H1 (cell line): ENCODE measurements at regions of chr19 and their contacts with region 1.

Region 1: GRCh38 chr19:29873024-29873800 is 61.4 kb downstream of the CCNE1 start:
- DNase-seq: peak in 1 of 2 experiments; percentile 94
- H3K4me3 ChIP-seq: peak overlapping the region; percentile 24 to 70 (median 48)
- H3K27ac ChIP-seq: no peak overlapping the region
- H3K4me1 ChIP-seq: peaks cover 0 to 4% (median 1%) of the 10 kb centered on the region in 4 experiments; a peak in 4 of 7 replicates
- H3K27me3 ChIP-seq: peaks cover 0 to 14% (median 10%) of the 10 kb centered on the region in 4 experiments; a peak in 6 of 7 replicates
- CTCF ChIP-seq: peak; percentile 63 to 91 (median 79)
- EP300 ChIP-seq: no peak
- POLR2A ChIP-seq: no peak
- RAD21 ChIP-seq: peak; percentile 87 to 90

Region 2: DNA sequence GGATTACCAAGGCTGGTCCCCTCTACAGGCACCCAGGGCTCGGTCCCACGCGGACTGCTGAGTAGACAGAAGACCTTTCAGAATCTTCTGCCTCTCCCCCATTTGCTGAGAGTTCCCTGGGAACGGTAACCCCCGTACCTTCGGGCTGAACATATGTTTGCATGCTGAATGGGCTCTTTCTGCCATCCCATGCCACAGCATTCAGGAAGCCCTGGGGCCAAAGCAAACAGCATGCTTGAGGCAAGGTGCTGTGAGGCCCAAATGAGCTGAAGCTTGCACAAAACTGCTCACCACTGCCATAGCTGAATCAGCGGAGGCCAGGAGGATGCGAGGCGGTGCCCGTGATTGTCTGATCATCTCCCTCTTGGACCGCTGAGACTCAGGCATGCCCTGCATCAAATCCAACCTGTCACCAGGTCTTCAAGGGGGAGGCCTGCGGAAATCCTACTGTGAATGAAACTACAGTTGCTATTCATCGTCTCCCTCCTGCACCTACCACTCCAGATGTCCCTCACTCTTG is 141.8 kb before region 1 on chr19:
- CTCF ChIA-PET with region 1: interaction called, 16 read pairs
- POLR2A ChIA-PET with region 1: interaction called, 3 read pairs
- DNase-seq: no peak
- H3K4me3 ChIP-seq: no peak overlapping the region
- H3K27ac ChIP-seq: no peak overlapping the region
- H3K4me1 ChIP-seq: no peaks in the 10 kb centered on the region
- H3K27me3 ChIP-seq: no peaks in the 10 kb centered on the region
- CTCF ChIP-seq: no peak
- EP300 ChIP-seq: no peak
- POLR2A ChIP-seq: no peak
- RAD21 ChIP-seq: no peak

Region 3: DNA sequence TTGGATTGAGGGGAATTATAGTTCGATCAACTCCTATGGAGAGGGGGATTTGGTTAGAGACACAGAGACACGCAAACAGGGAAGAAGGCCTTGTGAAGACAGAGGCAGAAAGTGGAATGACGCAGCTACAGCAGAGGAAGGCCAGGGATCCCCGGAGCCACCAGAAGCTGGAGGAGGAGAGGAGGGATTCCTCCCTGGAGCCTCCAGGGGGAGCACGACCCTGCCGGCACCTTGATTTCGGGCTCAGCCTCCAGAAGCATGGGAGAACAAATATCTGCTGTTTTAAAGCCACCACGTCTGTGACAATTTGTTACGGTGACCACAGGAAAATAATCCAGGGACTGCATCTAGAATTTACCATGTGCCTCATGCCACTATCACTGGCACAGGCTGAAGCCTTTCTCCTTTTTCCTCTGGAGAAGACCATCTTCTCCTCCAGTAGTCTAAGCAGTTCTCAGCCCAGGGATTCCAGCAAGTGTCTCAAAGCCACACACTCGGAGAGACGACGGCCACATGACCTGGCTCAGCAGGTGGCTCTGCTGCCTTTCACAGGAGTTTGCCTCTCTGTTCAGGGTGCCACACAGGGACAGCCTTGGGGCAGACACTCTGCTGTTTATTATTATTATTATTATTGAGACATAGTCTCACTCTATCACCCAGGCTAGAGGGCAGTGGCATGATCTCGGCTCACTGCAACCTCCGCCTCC is 101.4 kb before region 1 on chr19:
- CTCF ChIA-PET with region 1: interaction called, 22 read pairs
- POLR2A ChIA-PET with region 1: no interaction called
- DNase-seq: peak; percentile 41 to 78
- H3K4me3 ChIP-seq: no peak overlapping the region
- H3K27ac ChIP-seq: no peak overlapping the region
- H3K4me1 ChIP-seq: peaks cover 0 to 6% (median 3%) of the 10 kb centered on the region in 4 experiments; a peak in 4 of 7 replicates
- H3K27me3 ChIP-seq: no peaks in the 10 kb centered on the region
- CTCF ChIP-seq: peak; percentile 72 to 90 (median 77)
- EP300 ChIP-seq: no peak
- POLR2A ChIP-seq: no peak
- RAD21 ChIP-seq: peak; percentile 45 to 65

Region 4: DNA sequence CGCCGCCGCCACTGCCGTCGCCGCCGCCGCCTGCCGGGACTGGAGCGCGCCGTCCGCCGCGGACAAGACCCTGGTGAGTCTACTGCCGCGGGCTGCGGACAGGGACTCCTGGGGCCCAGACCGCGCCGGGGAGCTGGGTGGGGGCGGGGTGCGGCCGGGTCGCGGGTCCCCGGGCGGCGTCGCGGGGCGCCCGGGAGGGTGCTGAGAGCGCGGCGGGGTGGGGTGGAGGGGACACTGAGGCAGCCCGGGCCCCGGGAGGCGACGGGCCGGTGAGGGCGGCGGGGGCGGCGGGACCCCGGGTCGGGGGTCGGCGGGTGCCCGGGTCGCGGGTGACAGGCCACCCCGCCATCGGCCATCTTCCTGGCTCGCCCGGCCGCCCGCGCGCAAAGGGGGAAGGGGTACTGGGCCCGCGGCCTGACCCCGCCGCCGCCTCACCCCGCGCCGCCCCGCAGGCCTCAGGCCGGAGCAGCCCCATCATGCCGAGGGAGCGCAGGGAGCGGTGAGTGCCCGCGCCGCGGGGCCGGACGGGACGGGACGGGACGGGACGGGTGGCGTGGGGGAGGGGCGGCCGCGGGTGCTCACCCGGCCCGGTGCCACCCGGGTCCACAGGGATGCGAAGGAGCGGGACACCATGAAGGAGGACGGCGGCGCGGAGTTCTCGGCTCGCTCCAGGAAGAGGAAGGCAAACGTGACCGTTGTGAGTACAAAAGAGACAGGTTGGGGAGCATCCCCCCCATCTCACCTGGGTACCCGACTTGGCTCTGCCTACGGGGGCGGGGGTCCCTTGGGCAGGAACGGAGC is 60.9 kb before region 1 on chr19:
- CTCF ChIA-PET with region 1: interaction called, 11 read pairs
- POLR2A ChIA-PET with region 1: no interaction called
- DNase-seq: peak in 1 of 2 experiments; percentile 55
- H3K4me3 ChIP-seq: peak overlapping the region; percentile 33 to 81 (median 44)
- H3K27ac ChIP-seq: no peak overlapping the region
- H3K4me1 ChIP-seq: peaks cover 0 to 6% (median 2%) of the 10 kb centered on the region in 4 experiments; a peak in 3 of 7 replicates
- H3K27me3 ChIP-seq: peaks cover 0 to 6% (median 2%) of the 10 kb centered on the region in 4 experiments; a peak in 1 of 7 replicates
- CTCF ChIP-seq: no peak
- EP300 ChIP-seq: no peak
- POLR2A ChIP-seq: no peak
- RAD21 ChIP-seq: no peak

Region 5: GRCh38 chr19:29851769-29852521 is 21.3 kb before region 1 on chr19:
- CTCF ChIA-PET with region 1: interaction called, 134 read pairs
- POLR2A ChIA-PET with region 1: no interaction called
- DNase-seq: no peak
- H3K4me3 ChIP-seq: no peak overlapping the region
- H3K27ac ChIP-seq: no peak overlapping the region
- H3K4me1 ChIP-seq: no peaks in the 10 kb centered on the region
- H3K27me3 ChIP-seq: no peaks in the 10 kb centered on the region
- CTCF ChIP-seq: no peak
- EP300 ChIP-seq: no peak
- POLR2A ChIP-seq: no peak
- RAD21 ChIP-seq: no peak

Region 6: DNA sequence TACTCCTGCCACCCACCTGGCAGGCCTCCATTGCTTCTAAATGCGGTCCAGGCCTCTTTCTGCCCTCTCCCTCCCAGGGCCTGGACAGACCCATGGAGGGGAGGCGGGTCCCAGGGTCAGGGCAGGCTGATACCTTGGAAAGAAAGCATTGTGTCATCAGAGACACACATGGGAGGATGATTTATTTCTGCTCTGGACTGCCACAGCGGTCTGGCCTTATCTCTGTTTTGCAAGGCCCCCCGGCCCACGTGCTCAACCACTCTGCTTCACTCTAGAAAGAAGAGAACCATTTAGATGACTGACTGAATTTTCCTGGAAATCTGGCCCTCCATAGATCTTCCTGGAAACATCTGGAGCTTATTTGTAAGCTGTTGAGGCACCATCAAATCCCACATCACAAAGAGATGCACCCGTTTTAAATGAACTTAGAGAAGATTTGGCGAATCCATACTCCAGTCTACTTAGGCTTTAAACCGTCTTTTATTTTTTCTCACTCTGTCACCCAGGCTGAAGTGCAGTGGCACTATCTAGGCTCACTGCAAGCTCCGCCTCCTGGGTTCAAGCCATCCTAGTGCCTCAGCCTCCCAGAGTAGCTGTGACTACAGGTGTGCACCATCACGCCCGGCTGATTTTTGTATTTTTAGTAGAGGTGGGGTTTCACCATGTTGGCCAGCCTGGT is 20.5 kb after region 1 on chr19:
- CTCF ChIA-PET with region 1: no interaction called
- POLR2A ChIA-PET with region 1: no interaction called
- DNase-seq: no peak
- H3K4me3 ChIP-seq: no peak overlapping the region
- H3K27ac ChIP-seq: no peak overlapping the region
- H3K4me1 ChIP-seq: no peaks in the 10 kb centered on the region
- H3K27me3 ChIP-seq: no peaks in the 10 kb centered on the region
- CTCF ChIP-seq: no peak
- EP300 ChIP-seq: no peak
- POLR2A ChIP-seq: no peak
- RAD21 ChIP-seq: no peak